ENCODE measurements at regions of chr1 and their contacts with region 1.

Region 1: GRCh38 chr1:97137862-97138514 is 416.4 kb downstream of the PTBP2 start:
- DNase-seq: peak; percentile 95
- H3K4me3 ChIP-seq: no peak overlapping the region
- H3K27ac ChIP-seq: peak overlapping the region; percentile 27
- H3K4me1 ChIP-seq: peaks cover 10% of the 10 kb centered on the region
- H3K27me3 ChIP-seq: no peaks in the 10 kb centered on the region
- CTCF ChIP-seq: peak; percentile 52 to 65
- POLR2A ChIP-seq: no peak

Region 2: GRCh38 chr1:97151651-97152050 is 13.7 kb after region 1 on chr1:
- CTCF ChIA-PET with region 1: interaction called, 18 read pairs
- POLR2A ChIA-PET with region 1: no interaction called
- dilution Hi-C with region 1: no loop called
- intact Hi-C with region 1: no loop called
- DNase-seq: no peak
- H3K4me3 ChIP-seq: no peak overlapping the region
- H3K27ac ChIP-seq: no peak overlapping the region
- H3K4me1 ChIP-seq: no peaks in the 10 kb centered on the region
- H3K27me3 ChIP-seq: no peaks in the 10 kb centered on the region
- CTCF ChIP-seq: no peak
- POLR2A ChIP-seq: no peak

Region 3: DNA sequence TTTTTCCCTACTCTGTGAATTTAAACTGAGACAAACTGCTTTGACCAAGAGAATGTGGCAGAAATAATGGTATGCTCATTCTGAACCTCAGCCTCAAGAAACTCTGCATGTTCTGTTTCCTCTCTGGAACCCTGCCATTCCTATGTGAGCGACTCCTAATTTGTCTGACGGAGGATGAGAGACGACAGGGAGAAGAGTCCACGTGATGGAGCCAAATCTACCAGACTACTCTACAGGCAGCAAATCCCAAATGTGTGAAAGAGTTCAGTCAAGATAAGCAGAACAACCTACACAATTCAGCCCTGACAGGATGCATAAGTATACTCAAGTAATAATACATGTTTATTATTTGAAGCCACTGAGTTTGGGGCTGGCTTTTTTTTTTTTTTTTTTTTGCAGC is 629.4 kb after region 1 on chr1:
- CTCF ChIA-PET with region 1: no interaction called
- POLR2A ChIA-PET with region 1: no interaction called
- dilution Hi-C with region 1: no loop called
- intact Hi-C with region 1: no loop called
- DNase-seq: no peak
- H3K4me3 ChIP-seq: no peak overlapping the region
- H3K27ac ChIP-seq: no peak overlapping the region
- H3K4me1 ChIP-seq: no peaks in the 10 kb centered on the region
- H3K27me3 ChIP-seq: no peaks in the 10 kb centered on the region
- CTCF ChIP-seq: no peak
- POLR2A ChIP-seq: no peak

Measured in endothelial cell of umbilical vein (primary cell).